Calu3 (cell line): ENCODE measurements at regions of chr10 and their contacts with region 1.

Region 1: GRCh38 chr10:82150120-82150900 is 275.3 kb downstream of the NRG3 start:
- DNase-seq: peak; percentile 69
- H3K4me3 Mint-ChIP-seq: no peak overlapping the region
- H3K27ac Mint-ChIP-seq: no peak overlapping the region
- H3K4me1 Mint-ChIP-seq: peaks cover 8% of the 10 kb centered on the region
- H3K27me3 Mint-ChIP-seq: no peaks in the 10 kb centered on the region
- CTCF ChIP-seq: peak; percentile 65

Region 2: GRCh38 chr10:82266438-82266837 is 116.1 kb after region 1 on chr10:
- CTCF ChIA-PET with region 1: interaction called, 11 read pairs
- intact Hi-C with region 1: no loop called
- DNase-seq: no peak
- H3K4me3 Mint-ChIP-seq: no peak overlapping the region
- H3K27ac Mint-ChIP-seq: no peak overlapping the region
- H3K4me1 Mint-ChIP-seq: no peaks in the 10 kb centered on the region
- H3K27me3 Mint-ChIP-seq: no peaks in the 10 kb centered on the region
- CTCF ChIP-seq: no peak

Region 3: GRCh38 chr10:82294874-82295378 is 144.6 kb after region 1 on chr10:
- CTCF ChIA-PET with region 1: no interaction called
- intact Hi-C with region 1: no loop called
- DNase-seq: no peak
- H3K4me3 Mint-ChIP-seq: no peak overlapping the region
- H3K27ac Mint-ChIP-seq: no peak overlapping the region
- H3K4me1 Mint-ChIP-seq: no peaks in the 10 kb centered on the region
- H3K27me3 Mint-ChIP-seq: no peaks in the 10 kb centered on the region
- CTCF ChIP-seq: no peak